Cardiac septum (tissue), 1 donor: ENCODE measurements at regions of chr22 and their contacts with region 1.

Region 1: DNA sequence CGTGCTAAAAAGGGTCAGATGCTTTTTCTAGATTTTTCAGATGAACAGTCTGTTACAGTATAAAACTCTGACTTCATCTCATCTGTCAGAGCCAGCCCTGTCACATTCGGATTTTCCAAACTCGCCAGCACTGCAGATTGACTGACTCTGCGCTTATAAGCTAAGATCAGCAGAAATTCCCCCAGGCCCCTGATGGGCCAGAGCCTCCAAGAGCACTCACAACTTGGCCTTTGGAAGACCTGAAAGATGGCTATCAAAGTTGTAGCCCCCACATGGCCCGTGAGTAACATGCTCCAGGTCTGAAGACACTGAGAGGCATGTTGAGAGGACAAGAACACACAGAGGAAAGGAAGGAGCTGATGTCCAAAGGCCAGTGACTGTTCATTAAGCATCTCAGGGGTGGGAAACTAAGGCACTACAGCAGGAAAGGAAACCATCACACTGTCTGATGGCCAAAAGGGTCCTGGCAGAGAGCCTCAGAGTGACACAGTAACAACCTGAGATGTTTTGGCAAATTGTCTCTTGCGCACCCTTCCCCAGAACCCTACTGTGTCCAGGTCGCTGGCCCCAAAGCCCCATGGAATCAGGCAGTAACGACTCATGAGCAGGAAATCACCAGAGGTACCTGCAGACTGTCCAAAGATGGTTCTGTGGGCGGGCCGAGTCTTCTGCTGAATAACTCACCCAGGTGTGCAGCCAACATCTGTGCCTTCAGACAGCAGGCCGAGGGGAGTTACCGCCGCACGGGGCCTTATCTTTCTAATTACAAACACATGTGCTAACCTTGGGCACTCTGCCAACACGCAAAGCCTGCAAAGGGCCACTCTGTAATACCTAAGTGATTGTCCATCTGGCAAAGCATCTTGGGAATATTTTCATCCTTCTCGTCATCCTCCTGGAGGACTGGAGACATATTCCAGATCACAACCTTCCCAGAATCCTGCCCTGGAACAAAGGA is 23.6 kb downstream of the HIRA start:
- DNase-seq: no peak

Region 2: GRCh38 chr22:19341500-19341899 is 66.4 kb before region 1 on chr22:
- intact Hi-C with region 1: loop called (anchors 10 kb)
- DNase-seq: no peak

Region 3: GRCh38 chr22:19447388-19448075 is 39.6 kb after region 1 on chr22 and contains the start of gene C22orf39:
- intact Hi-C with region 1: no loop called
- DNase-seq: peak; percentile 95
- total RNA-seq, gene C22orf39: 48.7 TPM